Right ventricle myocardium superior (tissue), 1 donor: ENCODE measurements at regions of chr18 and their contacts with region 1.

Region 1: GRCh38 chr18:75884728-75885127 is 457.2 kb upstream of the SMIM21 start:
- DNase-seq: no peak
- ATAC-seq: peak; percentile 48

Region 2: DNA sequence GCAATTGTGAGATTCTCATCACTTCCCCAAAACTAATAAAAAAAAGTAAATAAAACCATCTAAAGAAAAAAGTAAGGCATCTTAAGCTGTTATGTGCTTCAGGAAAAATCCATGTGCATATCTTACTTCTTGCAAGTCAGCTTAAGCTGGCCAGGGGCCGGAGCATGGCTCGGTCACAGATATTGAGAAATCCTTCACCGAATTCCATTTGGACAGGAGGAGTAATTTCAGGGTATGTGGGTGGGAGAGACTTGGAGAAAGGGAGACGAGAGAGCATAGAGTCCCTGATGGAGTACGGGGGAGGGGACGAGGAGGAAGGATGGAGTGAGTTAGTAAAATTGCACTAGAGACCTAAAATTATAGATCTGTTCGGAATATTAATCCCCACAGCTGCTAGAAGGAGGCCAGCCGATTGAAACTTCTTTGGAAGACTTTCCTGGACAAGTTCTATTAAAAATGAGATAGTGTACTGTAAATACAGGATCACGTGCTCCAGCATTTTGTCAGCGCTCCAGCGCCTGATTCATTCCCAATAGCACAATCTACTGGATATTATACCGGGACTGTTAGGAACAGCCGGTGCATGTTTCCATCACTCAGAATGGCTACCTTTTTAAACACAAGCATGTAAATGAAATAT is 171.9 kb after region 1 on chr18:
- intact Hi-C with region 1: no loop called
- DNase-seq: peak; percentile 76
- ATAC-seq: peak; percentile 77

Region 3: GRCh38 chr18:76126327-76126726 is 241.6 kb after region 1 on chr18:
- intact Hi-C with region 1: loop called (anchors 2 kb)
- DNase-seq: no peak
- ATAC-seq: peak; percentile 88

Region 4: GRCh38 chr18:76259096-76259495 is 374.4 kb after region 1 on chr18:
- intact Hi-C with region 1: loop called (anchors 5 kb)
- DNase-seq: no peak
- ATAC-seq: peak; percentile 22